GM12878 (cell line): ENCODE measurements at regions of chr1 and their contacts with region 1.

Region 1: DNA sequence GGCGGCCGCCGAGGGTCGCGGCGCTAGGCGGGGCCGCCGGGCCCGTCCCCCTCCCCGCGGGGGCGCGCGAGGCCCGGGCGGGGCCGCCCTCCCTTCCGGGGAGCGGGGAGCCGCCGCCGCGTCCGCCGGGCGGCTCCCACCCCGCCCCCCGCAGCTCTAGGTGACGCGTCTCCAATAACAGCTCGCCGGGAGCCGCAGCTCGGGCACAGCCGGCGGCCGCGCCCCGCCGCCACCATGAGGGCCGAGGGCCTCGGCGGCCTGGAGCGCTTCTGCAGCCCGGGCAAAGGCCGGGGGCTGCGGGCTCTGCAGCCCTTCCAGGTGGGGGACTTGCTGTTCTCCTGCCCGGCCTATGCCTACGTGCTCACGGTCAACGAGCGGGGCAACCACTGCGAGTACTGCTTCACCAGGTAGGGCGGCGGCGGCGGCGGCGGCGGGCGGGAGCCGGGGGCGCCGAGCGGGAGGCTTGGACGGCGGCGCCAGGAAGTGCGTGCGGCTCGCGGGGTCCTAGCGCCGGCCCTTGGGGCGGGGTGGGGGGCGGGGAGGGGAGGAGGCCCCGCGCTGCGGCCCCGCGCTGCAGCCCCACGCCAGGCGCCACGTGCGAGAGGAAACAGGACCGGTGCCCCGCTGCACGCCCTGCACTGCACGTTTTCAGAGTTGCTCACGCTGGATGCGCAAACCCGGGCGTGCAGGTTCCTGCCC is at the start of gene SMYD2:
- DNase-seq: no peak
- ATAC-seq: peak; percentile 86
- H3K4me3 ChIP-seq: peak within 1 kb of the TSS; percentile 90
- H3K27ac ChIP-seq: peak within 1 kb of the TSS; percentile 71
- H3K4me1 ChIP-seq: no peaks in the 10 kb centered on the region; the same call in 1 of the 2 replicates
- H3K27me3 ChIP-seq: no peaks in the 10 kb centered on the region
- CTCF ChIP-seq: no peak
- EP300 ChIP-seq: no peak
- POLR2A ChIP-seq: peak; percentile 75
- RAD21 ChIP-seq: no peak
- polyA plus RNA-seq, gene SMYD2: 8.3 to 17.0 TPM

Region 2: GRCh38 chr1:214321705-214322453 is 40.7 kb after region 1 on chr1:
- CTCF ChIA-PET with region 1: interaction called, 7 read pairs
- POLR2A ChIA-PET with region 1: no interaction called
- RAD21 ChIA-PET with region 1: interaction called, 4 read pairs
- SMC1A ChIA-PET with region 1: interaction called, 11 read pairs
- in situ Hi-C with region 1: no loop called
- intact Hi-C with region 1: loop called (anchors 5 kb)
- DNase-seq: peak; percentile 30
- ATAC-seq: peak; percentile 95
- H3K4me3 ChIP-seq: no peak overlapping the region; the same call in 1 of the 2 replicates
- H3K27ac ChIP-seq: no peak overlapping the region
- H3K4me1 ChIP-seq: peaks cover 13% of the 10 kb centered on the region
- H3K27me3 ChIP-seq: no peaks in the 10 kb centered on the region
- CTCF ChIP-seq: no peak
- EP300 ChIP-seq: no peak
- POLR2A ChIP-seq: no peak
- RAD21 ChIP-seq: no peak